AG04450 (cell line): ENCODE measurements at regions of chr11 and their contacts with region 1.

Region 1: GRCh38 chr11:43797337-43797736 is 83.3 kb upstream of the ALKBH3 start:
- DNase-seq: no peak
- H3K4me3 ChIP-seq: no peak overlapping the region
- H3K27ac ChIP-seq: no peak overlapping the region
- H3K27me3 ChIP-seq: no peaks in the 10 kb centered on the region
- CTCF ChIP-seq: no peak

Region 2: GRCh38 chr11:43341159-43341558 is 456.2 kb before region 1 on chr11:
- CTCF ChIA-PET with region 1: interaction called, 10 read pairs
- POLR2A ChIA-PET with region 1: no interaction called
- DNase-seq: no peak
- H3K4me3 ChIP-seq: no peak overlapping the region
- H3K27ac ChIP-seq: no peak overlapping the region
- H3K27me3 ChIP-seq: no peaks in the 10 kb centered on the region
- CTCF ChIP-seq: no peak

Region 3: GRCh38 chr11:43765194-43765593 is 32.1 kb before region 1 on chr11:
- CTCF ChIA-PET with region 1: no interaction called
- POLR2A ChIA-PET with region 1: no interaction called
- DNase-seq: no peak
- H3K4me3 ChIP-seq: no peak overlapping the region
- H3K27ac ChIP-seq: no peak overlapping the region
- H3K27me3 ChIP-seq: no peaks in the 10 kb centered on the region
- CTCF ChIP-seq: no peak